Endothelial cell of umbilical vein (primary cell): ENCODE measurements at regions of chr1 and their contacts with region 1.

Region 1: DNA sequence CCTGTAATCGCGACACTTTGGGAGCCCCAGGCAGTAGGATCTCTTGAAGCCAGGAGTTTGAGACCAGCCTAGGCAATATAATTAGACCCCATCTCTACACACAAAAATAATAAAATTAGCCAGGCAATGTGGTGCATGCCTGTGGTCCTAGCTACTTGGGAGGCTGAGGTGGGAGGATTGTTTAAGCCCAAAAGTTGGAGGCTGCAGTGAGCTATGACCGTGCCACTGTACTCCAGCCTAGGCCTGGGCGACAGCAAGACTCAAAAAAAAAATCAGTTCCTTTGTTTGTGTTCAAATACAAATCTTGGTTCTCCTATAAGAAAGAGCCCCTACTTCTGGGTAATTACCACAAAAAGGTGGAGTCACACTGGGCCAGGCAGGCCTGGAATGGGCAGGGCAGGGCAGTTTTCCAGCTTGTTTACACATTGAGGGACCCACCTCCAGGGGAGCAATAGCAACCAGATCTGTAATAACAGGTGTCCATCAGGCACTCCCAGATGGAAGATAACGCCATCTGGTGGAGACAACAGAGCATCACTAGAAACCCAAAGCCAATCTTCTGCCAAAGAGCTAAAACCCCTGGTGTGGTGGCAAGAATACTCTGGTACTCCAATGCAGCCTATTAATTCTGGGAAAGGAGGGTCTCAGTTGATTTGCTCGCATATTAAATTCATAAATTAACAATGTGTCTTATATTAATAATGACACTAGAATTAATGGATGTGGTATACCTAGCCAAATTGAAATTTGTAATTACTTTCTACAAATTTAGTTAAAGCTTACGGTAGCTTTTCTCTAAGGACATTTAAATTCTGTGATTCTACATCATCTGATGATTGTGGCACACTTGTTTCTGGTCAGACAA is 13.2 kb downstream of the PPP1R15B start:
- DNase-seq: peak; percentile 80
- H3K4me3 ChIP-seq: no peak overlapping the region
- H3K27ac ChIP-seq: no peak overlapping the region
- H3K4me1 ChIP-seq: no peaks in the 10 kb centered on the region
- H3K27me3 ChIP-seq: no peaks in the 10 kb centered on the region
- CTCF ChIP-seq: peak; percentile 80 to 86
- POLR2A ChIP-seq: no peak

Region 2: GRCh38 chr1:204198151-204198994 is 200.1 kb before region 1 on chr1:
- CTCF ChIA-PET with region 1: interaction called, 12 read pairs
- POLR2A ChIA-PET with region 1: no interaction called
- dilution Hi-C with region 1: no loop called
- intact Hi-C with region 1: no loop called
- DNase-seq: peak; percentile 89
- H3K4me3 ChIP-seq: no peak overlapping the region
- H3K27ac ChIP-seq: peak overlapping the region; percentile 87
- H3K4me1 ChIP-seq: peaks cover 32% of the 10 kb centered on the region
- H3K27me3 ChIP-seq: no peaks in the 10 kb centered on the region
- CTCF ChIP-seq: no peak
- POLR2A ChIP-seq: no peak

Region 3: DNA sequence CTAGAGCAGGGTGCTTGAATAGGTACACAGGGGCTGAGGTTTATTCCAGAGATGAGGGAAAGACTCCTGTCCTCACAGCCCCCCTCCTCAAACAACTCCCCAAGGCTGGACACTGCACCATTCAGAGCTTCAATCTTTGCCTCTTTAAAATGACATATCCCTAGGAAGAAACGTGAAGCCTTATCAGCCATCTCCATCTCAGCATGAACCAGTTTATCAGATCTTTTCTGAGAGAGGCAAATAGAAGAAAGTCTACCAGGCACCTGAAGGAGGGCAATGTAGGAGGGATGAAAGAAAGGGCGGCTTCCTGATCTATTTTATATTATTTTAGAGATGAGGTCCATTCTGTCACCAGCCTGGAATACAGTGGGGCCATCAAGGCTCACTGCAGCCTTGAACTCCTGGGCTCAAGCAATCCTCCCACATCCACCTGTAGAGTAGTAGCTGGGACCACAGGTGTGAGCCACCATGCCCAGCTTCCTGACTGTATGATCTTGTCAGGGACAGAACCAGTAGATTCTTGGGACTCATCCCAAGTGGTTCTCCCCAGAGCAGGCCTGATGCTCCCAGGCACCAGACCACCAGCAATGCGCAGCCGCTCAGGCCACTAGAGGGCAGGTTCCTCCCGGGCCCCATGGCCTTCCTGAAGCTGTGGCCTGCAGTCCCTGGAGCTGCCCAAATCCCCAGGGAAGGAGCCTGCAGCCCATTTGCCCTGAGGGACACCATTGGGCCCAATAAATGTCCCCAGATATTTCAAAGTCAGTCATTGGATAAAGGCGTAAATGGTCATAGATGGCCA is 140.3 kb before region 1 on chr1:
- CTCF ChIA-PET with region 1: interaction called, 45 read pairs
- POLR2A ChIA-PET with region 1: no interaction called
- dilution Hi-C with region 1: no loop called
- intact Hi-C with region 1: loop called (anchors 1 kb)
- DNase-seq: peak; percentile 69
- H3K4me3 ChIP-seq: no peak overlapping the region
- H3K27ac ChIP-seq: no peak overlapping the region
- H3K4me1 ChIP-seq: no peaks in the 10 kb centered on the region
- H3K27me3 ChIP-seq: no peaks in the 10 kb centered on the region
- CTCF ChIP-seq: peak; percentile 89 to 96
- POLR2A ChIP-seq: no peak

Region 4: GRCh38 chr1:204377795-204378608 is 20.4 kb before region 1 on chr1:
- CTCF ChIA-PET with region 1: interaction called, 164 read pairs
- POLR2A ChIA-PET with region 1: interaction called, 4 read pairs
- dilution Hi-C with region 1: no loop called
- intact Hi-C with region 1: loop called (anchors 1 kb)
- DNase-seq: peak; percentile 45
- H3K4me3 ChIP-seq: peak overlapping the region; percentile 47 to 68 (median 57)
- H3K27ac ChIP-seq: peak overlapping the region; percentile 33
- H3K4me1 ChIP-seq: peaks cover 21% of the 10 kb centered on the region
- H3K27me3 ChIP-seq: no peaks in the 10 kb centered on the region
- CTCF ChIP-seq: no peak
- POLR2A ChIP-seq: no peak

Region 5: GRCh38 chr1:204431310-204432165 is 33.1 kb after region 1 on chr1:
- CTCF ChIA-PET with region 1: interaction called, 11 read pairs
- POLR2A ChIA-PET with region 1: no interaction called
- dilution Hi-C with region 1: no loop called
- intact Hi-C with region 1: no loop called
- DNase-seq: peak; percentile 75
- H3K4me3 ChIP-seq: no peak overlapping the region
- H3K27ac ChIP-seq: no peak overlapping the region
- H3K4me1 ChIP-seq: peaks cover 12% of the 10 kb centered on the region
- H3K27me3 ChIP-seq: no peaks in the 10 kb centered on the region
- CTCF ChIP-seq: peak; percentile 89 to 90
- POLR2A ChIP-seq: no peak

Region 6: DNA sequence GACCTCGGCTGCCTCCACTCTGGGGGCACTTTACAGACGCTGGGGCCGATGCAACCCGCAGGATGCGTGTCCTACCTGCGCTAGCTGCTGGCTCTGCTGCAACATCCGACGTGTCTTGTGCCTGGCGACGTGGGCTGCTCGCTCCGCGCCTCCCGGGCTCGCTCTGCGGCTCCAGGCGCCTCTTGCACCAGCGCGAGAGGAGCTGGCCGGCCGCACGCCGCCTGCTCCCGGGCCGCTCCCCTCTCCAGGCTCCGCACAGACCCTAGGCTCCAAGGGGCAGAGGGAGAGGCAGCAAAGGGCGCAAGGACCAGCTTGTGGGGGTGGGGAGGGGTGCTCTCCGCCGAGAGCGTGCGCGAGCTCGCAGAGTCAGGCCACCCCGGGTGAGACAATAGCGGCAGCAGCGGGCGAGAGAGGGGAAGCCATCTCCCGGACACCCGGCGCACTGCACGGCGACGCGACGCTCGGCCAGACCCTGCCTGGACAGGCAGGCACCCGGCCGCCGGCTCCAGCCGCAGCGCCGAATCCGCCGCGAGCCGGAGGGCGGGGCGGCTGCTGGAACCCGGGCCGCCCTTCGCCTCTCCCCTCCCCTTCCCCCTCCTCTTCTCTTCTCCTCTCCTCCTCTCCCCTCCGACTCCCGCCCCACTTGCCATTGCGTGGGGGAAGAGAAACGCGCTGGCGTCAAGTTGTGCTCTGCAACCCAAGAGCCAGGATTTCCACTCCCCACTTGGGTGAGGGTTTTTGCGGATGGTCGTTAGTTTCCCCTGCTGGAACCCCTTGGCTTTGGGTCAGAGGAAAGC is 96.0 kb after region 1 on chr1 and contains the start of gene PIK3C2B:
- CTCF ChIA-PET with region 1: interaction called, 16 read pairs
- POLR2A ChIA-PET with region 1: no interaction called
- dilution Hi-C with region 1: no loop called
- intact Hi-C with region 1: no loop called
- DNase-seq: peak; percentile 88
- H3K4me3 ChIP-seq: peak within 1 kb of the TSS; percentile 56 to 85 (median 64)
- H3K27ac ChIP-seq: peak within 1 kb of the TSS; percentile 63
- H3K4me1 ChIP-seq: peaks cover 18% of the 10 kb centered on the region
- H3K27me3 ChIP-seq: no peaks in the 10 kb centered on the region
- CTCF ChIP-seq: peak; percentile 49 to 64
- POLR2A ChIP-seq: peak; percentile 82
- total RNA-seq, gene PIK3C2B: 41.8 and 49.0 TPM in 2 replicates

Region 7: GRCh38 chr1:204991342-204991844 is 592.9 kb after region 1 on chr1:
- CTCF ChIA-PET with region 1: no interaction called
- POLR2A ChIA-PET with region 1: no interaction called
- dilution Hi-C with region 1: no loop called
- intact Hi-C with region 1: no loop called
- DNase-seq: no peak
- H3K4me3 ChIP-seq: no peak overlapping the region
- H3K27ac ChIP-seq: no peak overlapping the region
- H3K4me1 ChIP-seq: no peaks in the 10 kb centered on the region
- H3K27me3 ChIP-seq: peaks cover 0 to 16% of the 10 kb centered on the region in 2 experiments
- CTCF ChIP-seq: no peak
- POLR2A ChIP-seq: no peak